HEK293 (cell line): ENCODE measurements at regions of chr6 and their contacts with region 1.

Region 1: DNA sequence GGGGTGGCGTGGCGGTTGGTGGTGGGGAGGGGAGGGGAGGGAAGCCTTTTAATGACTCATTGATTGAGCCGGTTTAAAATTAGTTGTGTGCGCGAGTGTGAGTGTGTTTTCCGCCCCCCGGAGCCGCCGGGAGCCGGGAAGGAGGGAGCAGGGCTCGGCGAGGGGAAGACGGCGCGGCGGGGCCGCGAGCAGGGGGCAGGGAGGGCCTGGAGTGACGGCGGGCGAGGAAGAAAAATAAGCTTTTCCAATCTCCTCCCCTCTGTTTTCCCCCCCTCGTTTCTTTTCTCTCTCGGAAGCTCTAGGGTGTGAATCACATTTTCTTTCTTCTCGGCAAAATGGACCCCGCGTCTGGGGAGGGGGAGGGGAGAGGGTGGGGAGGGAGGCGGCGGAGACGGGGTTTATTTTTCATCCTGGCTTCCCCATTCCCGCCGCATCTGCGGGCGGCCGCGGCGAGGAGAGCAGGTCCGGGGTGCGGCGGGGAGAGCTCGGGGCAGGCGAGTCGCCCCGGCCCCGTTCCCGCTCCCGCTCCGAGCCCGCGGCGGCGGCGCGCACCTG is 847 bp downstream of the BICRAL start:
- H3K4me3 ChIP-seq: peak overlapping the region; percentile 98
- H3K27ac ChIP-seq: peak overlapping the region; percentile 100
- H3K4me1 ChIP-seq: peaks cover 10% of the 10 kb centered on the region; the same call in 1 of the 2 replicates
- CTCF ChIP-seq: no peak

Region 2: DNA sequence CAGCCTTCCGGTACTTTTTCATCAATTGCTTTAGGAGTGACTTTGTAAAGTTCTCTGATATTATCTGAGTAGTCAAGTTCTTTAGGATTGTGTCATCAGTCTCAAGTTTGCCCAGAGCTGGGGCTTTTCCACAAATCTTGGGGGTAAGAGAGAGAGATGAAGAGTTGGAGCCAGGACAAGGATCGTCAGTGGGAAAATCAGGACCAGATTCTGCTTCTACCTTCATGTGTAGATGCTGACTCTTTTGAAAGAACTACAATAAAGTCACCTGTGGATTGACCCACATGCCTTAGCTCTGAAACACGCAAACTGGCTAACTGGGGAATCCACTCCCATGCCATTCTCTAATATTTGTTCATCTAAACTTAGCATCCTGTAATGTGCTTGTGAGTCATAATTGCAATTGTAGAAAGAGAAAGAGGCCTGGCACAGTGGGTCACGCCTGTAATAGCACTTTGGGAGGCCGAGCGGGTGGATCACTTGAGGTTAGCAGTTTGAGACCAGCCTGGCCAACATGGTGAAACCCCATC is 16.5 kb before region 1 on chr6:
- CTCF ChIA-PET with region 1: interaction called, 5 read pairs
- POLR2A ChIA-PET with region 1: interaction called, 17 read pairs
- H3K4me3 ChIP-seq: no peak overlapping the region
- H3K27ac ChIP-seq: no peak overlapping the region
- H3K4me1 ChIP-seq: no peaks in the 10 kb centered on the region; the same call in 1 of the 2 replicates
- CTCF ChIP-seq: no peak

Region 3: DNA sequence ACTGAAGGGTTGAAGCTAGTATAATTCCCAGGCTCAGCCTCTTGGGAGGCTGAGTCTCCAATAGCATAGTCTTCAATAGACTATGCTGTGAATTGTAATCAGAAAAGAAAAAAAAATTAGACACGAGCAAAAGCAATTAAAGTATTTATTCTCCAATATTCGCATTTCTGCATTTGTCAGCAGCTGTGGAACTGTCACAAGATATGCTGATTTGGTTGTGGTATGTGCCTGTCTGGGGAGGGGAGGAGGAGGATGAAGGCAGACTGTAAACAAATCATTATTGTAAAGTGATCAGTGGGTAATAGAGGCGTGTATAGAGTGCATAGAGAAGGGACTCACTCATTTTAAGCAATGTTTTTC is 11.0 kb before region 1 on chr6:
- CTCF ChIA-PET with region 1: interaction called, 3 read pairs
- POLR2A ChIA-PET with region 1: interaction called, 17 read pairs
- H3K4me3 ChIP-seq: no peak overlapping the region
- H3K27ac ChIP-seq: no peak overlapping the region
- H3K4me1 ChIP-seq: no peaks in the 10 kb centered on the region
- CTCF ChIP-seq: no peak

Region 4: GRCh38 chr6:42890311-42891198 is 107.9 kb after region 1 on chr6:
- CTCF ChIA-PET with region 1: no interaction called
- POLR2A ChIA-PET with region 1: interaction called, 15 read pairs
- H3K4me3 ChIP-seq: peak overlapping the region; percentile 66
- H3K27ac ChIP-seq: peak overlapping the region; percentile 94
- H3K4me1 ChIP-seq: no peaks in the 10 kb centered on the region
- CTCF ChIP-seq: peak; percentile 51; the same call in 1 of the 2 replicates

Region 5: DNA sequence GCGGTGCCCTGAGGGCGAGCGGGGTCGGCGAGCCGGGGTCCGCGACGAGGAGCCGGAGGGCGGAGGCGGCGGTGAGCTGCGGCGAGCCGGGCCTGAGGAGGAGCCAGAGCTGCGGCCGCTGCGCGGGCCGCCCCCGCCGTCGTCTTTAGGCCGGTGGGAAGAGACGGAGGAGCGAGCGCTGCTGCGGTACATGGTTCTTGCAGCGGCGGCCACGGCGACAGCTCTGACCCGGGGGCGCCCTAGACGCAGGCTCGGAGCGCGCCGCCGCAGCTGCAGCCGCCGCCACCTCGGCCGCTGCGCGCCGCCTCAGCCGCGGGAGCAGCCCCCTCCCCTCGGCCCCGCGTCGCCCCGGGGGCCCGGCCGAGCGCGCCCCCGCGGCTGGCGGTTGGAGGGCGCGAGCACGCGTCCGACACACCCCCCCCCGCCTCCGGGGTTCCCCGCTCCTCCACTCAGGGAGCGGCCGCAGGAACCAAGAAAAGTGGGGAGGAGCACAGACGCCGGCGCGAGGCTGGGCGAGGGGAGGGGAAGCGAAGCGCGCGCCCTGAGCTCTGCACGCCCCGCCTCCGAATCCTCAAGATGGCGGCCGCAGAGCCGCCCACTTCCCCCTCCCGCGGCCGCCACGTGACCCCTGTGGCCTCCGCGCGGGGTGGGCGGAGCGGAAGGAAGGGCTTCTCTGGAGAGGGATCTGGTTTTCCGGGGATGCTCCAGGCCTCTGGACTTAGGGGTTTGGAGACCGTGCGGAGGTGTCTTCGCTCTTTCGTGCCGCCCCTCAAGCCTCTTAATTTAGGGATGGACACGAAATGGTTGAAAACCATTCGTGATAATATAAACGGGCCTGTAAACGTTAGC is 586.7 kb after region 1 on chr6 and contains the start of gene ZNF318:
- CTCF ChIA-PET with region 1: no interaction called
- POLR2A ChIA-PET with region 1: interaction called, 13 read pairs
- H3K4me3 ChIP-seq: peak within 1 kb of the TSS; percentile 77
- H3K27ac ChIP-seq: peak within 1 kb of the TSS; percentile 93
- H3K4me1 ChIP-seq: peaks cover 7% of the 10 kb centered on the region
- CTCF ChIP-seq: no peak

Region 6: DNA sequence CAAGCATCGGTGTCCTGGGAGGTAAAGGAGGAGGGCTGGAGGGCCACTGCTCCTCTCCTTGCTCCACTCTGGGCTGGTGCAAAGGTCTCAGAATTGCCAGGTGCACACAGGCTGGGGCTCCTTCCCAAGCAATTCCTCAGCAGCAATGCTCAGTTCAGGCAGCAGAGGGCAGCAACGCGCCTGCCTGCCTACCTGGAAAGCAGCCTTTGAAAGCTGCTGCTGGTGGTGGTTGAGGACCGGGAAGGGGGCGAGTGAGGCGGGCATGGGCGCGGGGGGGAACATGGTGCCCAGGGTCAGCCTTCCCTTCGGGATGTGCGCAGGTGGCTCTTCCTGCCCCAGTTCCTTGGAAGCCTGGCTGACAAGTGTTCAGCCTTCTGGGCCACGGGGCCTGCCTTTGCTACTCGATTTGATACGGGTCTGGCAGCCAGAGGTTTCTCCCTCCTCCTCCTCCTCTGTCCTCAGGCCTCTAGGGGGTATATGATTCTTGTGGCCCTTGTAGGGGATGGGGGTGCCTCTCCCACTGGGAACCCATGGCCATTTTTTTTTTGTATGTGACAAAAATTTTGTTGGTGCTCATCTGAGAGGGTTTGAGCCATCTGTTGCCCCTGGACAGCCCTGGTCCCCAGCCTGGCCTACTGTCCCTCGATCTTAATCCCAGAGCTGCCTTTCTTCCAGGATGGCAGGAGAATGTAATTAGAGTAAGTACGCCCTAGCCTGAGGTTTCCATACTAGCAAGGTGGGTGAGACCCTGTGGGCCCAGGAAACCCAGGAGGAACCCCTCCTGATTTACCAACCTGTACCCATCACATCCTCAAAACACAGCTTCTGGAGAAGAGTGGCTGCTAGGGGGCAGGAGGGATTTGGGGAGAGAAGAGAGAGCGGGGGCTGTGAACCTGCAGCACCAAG is 884.8 kb after region 1 on chr6:
- CTCF ChIA-PET with region 1: no interaction called
- POLR2A ChIA-PET with region 1: no interaction called
- H3K4me3 ChIP-seq: peak overlapping the region; percentile 10; the same call in 1 of the 2 replicates
- H3K27ac ChIP-seq: peak overlapping the region; percentile 19
- H3K4me1 ChIP-seq: peaks cover 3% of the 10 kb centered on the region; the same call in 1 of the 2 replicates
- CTCF ChIP-seq: peak; percentile 97